T-cell (primary cell): ENCODE measurements at regions of chr16 and their contacts with region 1.

Region 1: GRCh38 chr16:67028555-67029248 is at the start of gene CBFB:
- DNase-seq: peak; percentile 88 to 97 (median 93)
- ATAC-seq: peak; percentile 87 to 88 (median 88)
- H3K4me3 ChIP-seq: peak within 1 kb of the TSS; percentile 69 to 70
- H3K4me3 Mint-ChIP-seq: peak within 1 kb of the TSS; percentile 86 to 90 (median 89)
- H3K27ac ChIP-seq: peak within 1 kb of the TSS; percentile 98
- H3K27ac Mint-ChIP-seq: peak within 1 kb of the TSS; percentile 93 to 96
- H3K4me1 ChIP-seq: peaks cover 11 to 38% of the 10 kb centered on the region in 2 experiments
- H3K4me1 Mint-ChIP-seq: peaks cover 44 to 51% (median 50%) of the 10 kb centered on the region in 3 donors
- H3K27me3 ChIP-seq: no peaks in the 10 kb centered on the region
- H3K27me3 Mint-ChIP-seq: no peaks in the 10 kb centered on the region
- total RNA-seq, gene CBFB: 80.0 to 115 (median 96.5) TPM

Region 2: DNA sequence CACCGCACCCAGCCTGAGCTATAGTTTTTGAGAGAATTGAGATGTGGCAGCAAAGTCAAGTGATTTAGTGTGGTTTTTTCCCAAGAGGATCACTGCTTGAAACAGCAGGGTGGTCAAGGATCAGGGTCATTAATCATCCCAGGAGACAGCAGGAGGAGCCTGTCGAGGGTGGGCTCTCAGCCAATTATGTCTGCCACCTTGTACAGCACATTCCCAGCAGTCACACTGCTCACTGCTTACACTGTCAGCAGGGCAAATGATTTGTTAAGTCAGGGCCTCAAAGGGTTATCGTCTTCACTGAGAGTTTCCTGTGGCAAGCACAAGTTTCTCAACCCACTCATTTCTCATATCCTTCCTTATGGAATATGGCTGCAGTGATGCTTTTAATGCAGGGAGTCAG is 108.9 kb after region 1 on chr16:
- CTCF ChIA-PET with region 1: interaction called in 1 of 2 experiments, 13 read pairs
- POLR2A ChIA-PET with region 1: interaction called in 1 of 2 experiments, 3 read pairs
- DNase-seq: no peak
- ATAC-seq: no peak
- H3K4me3 ChIP-seq: no peak overlapping the region
- H3K4me3 Mint-ChIP-seq: no peak overlapping the region
- H3K27ac ChIP-seq: no peak overlapping the region
- H3K27ac Mint-ChIP-seq: no peak overlapping the region
- H3K4me1 ChIP-seq: no peaks in the 10 kb centered on the region
- H3K4me1 Mint-ChIP-seq: no peaks in the 10 kb centered on the region
- H3K27me3 ChIP-seq: peaks cover 0 to 2% of the 10 kb centered on the region in 2 experiments
- H3K27me3 Mint-ChIP-seq: no peaks in the 10 kb centered on the region

Region 3: GRCh38 chr16:67159593-67160406 is 131.1 kb after region 1 on chr16 and contains the starts of genes FBXL8 and TRADD:
- CTCF ChIA-PET with region 1: interaction called in 1 of 2 experiments, 14 read pairs
- POLR2A ChIA-PET with region 1: interaction called in 1 of 2 experiments, 13 read pairs
- DNase-seq: peak; percentile 53 to 88 (median 74)
- ATAC-seq: peak; percentile 72 to 75 (median 74)
- H3K4me3 ChIP-seq: peak within 1 kb of the TSS; percentile 96 to 97
- H3K4me3 Mint-ChIP-seq: peak within 1 kb of the TSS; percentile 87 to 93 (median 92)
- H3K27ac ChIP-seq: peak within 1 kb of the TSS; percentile 98
- H3K27ac Mint-ChIP-seq: peak within 1 kb of the TSS; percentile 97 to 100
- H3K4me1 ChIP-seq: peaks cover 31 to 95% of the 10 kb centered on the region in 2 experiments
- H3K4me1 Mint-ChIP-seq: peaks cover 43 to 65% (median 58%) of the 10 kb centered on the region in 3 donors
- H3K27me3 ChIP-seq: peaks cover 6 to 42% of the 10 kb centered on the region in 2 experiments
- H3K27me3 Mint-ChIP-seq: peaks cover 10 to 16% of the 10 kb centered on the region in 2 donors
- total RNA-seq, gene FBXL8: 18.5 to 69.7 (median 43.7) TPM
- total RNA-seq, gene TRADD: 58.3 to 179 (median 123) TPM